K562 (cell line): ENCODE measurements at regions of chr21 and their contacts with region 1.

Region 1: GRCh38 chr21:35400233-35400957 is 351.3 kb upstream of the RUNX1 start:
- DNase-seq: peak; percentile 18 to 79 (median 38)
- ATAC-seq: peak; percentile 92
- H3K4me3 ChIP-seq: no peak overlapping the region
- H3K27ac ChIP-seq: no peak overlapping the region
- H3K4me1 ChIP-seq: peaks cover 0 to 15% of the 10 kb centered on the region in 2 experiments; a peak in 3 of 5 replicates
- H3K27me3 ChIP-seq: no peaks in the 10 kb centered on the region; a peak in 2 of 5 replicates
- CTCF ChIP-seq: peak; percentile 53 to 82 (median 70)
- EP300 ChIP-seq: peak; percentile 48; the same call in 1 of the 2 replicates
- POLR2A ChIP-seq: no peak
- RAD21 ChIP-seq: peak; percentile 97 to 98

Region 2: GRCh38 chr21:34693192-34693810 is 707.1 kb before region 1 on chr21:
- CTCF ChIA-PET with region 1: no interaction called
- POLR2A ChIA-PET with region 1: no interaction called
- in situ Hi-C with region 1: no loop called
- intact Hi-C with region 1: loop called (anchors 5 kb)
- DNase-seq: peak; percentile 74 to 77 (median 75)
- ATAC-seq: peak; percentile 87
- H3K4me3 ChIP-seq: no peak overlapping the region
- H3K27ac ChIP-seq: no peak overlapping the region
- H3K4me1 ChIP-seq: no peaks in the 10 kb centered on the region; a peak in 1 of 5 replicates
- H3K27me3 ChIP-seq: peaks cover 19 to 21% of the 10 kb centered on the region in 2 experiments
- CTCF ChIP-seq: peak; percentile 77 to 93 (median 88)
- EP300 ChIP-seq: no peak
- POLR2A ChIP-seq: no peak
- RAD21 ChIP-seq: peak; percentile 88 to 94

Region 3: GRCh38 chr21:35102488-35103371 is 297.7 kb before region 1 on chr21:
- CTCF ChIA-PET with region 1: no interaction called
- POLR2A ChIA-PET with region 1: no interaction called
- in situ Hi-C with region 1: no loop called
- intact Hi-C with region 1: loop called (anchors 5 kb)
- DNase-seq: peak; percentile 39 to 82 (median 58)
- ATAC-seq: peak; percentile 50
- H3K4me3 ChIP-seq: no peak overlapping the region
- H3K27ac ChIP-seq: peak overlapping the region; percentile 70
- H3K4me1 ChIP-seq: peaks cover 37 to 77% of the 10 kb centered on the region in 2 experiments
- H3K27me3 ChIP-seq: no peaks in the 10 kb centered on the region
- CTCF ChIP-seq: no peak
- EP300 ChIP-seq: peak; percentile 5; the same call in 1 of the 2 replicates
- POLR2A ChIP-seq: no peak
- RAD21 ChIP-seq: no peak; a peak in 1 of 4 replicates

Region 4: GRCh38 chr21:35116777-35117176 is 283.6 kb before region 1 on chr21:
- CTCF ChIA-PET with region 1: no interaction called
- POLR2A ChIA-PET with region 1: no interaction called
- in situ Hi-C with region 1: no loop called
- intact Hi-C with region 1: no loop called
- DNase-seq: no peak
- ATAC-seq: no peak
- H3K4me3 ChIP-seq: no peak overlapping the region
- H3K27ac ChIP-seq: no peak overlapping the region
- H3K4me1 ChIP-seq: peaks cover 5 to 23% of the 10 kb centered on the region in 2 experiments; a peak in 4 of 5 replicates
- H3K27me3 ChIP-seq: no peaks in the 10 kb centered on the region
- CTCF ChIP-seq: no peak
- EP300 ChIP-seq: no peak
- POLR2A ChIP-seq: no peak
- RAD21 ChIP-seq: no peak